H1 (cell line): ENCODE measurements at regions of chr2 and their contacts with region 1.

Region 1: GRCh38 chr2:20675701-20676352 is 8.9 kb downstream of the GDF7 start:
- DNase-seq: peak in 1 of 2 experiments; percentile 66
- H3K4me3 ChIP-seq: no peak overlapping the region
- H3K27ac ChIP-seq: no peak overlapping the region
- H3K4me1 ChIP-seq: peaks cover 7 to 32% (median 17%) of the 10 kb centered on the region in 4 experiments
- H3K27me3 ChIP-seq: peaks cover 10 to 42% (median 32%) of the 10 kb centered on the region in 4 experiments
- CTCF ChIP-seq: peak in 1 of 3 experiments; percentile 22; a peak in 2 of 4 replicates
- EP300 ChIP-seq: no peak
- POLR2A ChIP-seq: no peak
- RAD21 ChIP-seq: no peak; a peak in 1 of 4 replicates

Region 2: GRCh38 chr2:20609349-20609994 is 66.4 kb before region 1 on chr2:
- CTCF ChIA-PET with region 1: no interaction called
- POLR2A ChIA-PET with region 1: no interaction called
- DNase-seq: no peak
- H3K4me3 ChIP-seq: no peak overlapping the region
- H3K27ac ChIP-seq: no peak overlapping the region
- H3K4me1 ChIP-seq: peaks cover 0 to 8% (median 5%) of the 10 kb centered on the region in 4 experiments; a peak in 6 of 7 replicates
- H3K27me3 ChIP-seq: no peaks in the 10 kb centered on the region
- CTCF ChIP-seq: no peak
- EP300 ChIP-seq: no peak
- POLR2A ChIP-seq: no peak
- RAD21 ChIP-seq: no peak

Region 3: GRCh38 chr2:20689428-20690264 is 13.8 kb after region 1 on chr2:
- CTCF ChIA-PET with region 1: interaction called, 35 read pairs
- POLR2A ChIA-PET with region 1: no interaction called
- DNase-seq: no peak
- H3K4me3 ChIP-seq: no peak overlapping the region
- H3K27ac ChIP-seq: no peak overlapping the region
- H3K4me1 ChIP-seq: no peaks in the 10 kb centered on the region
- H3K27me3 ChIP-seq: no peaks in the 10 kb centered on the region
- CTCF ChIP-seq: no peak
- EP300 ChIP-seq: no peak
- POLR2A ChIP-seq: no peak
- RAD21 ChIP-seq: no peak

Region 4: GRCh38 chr2:20728114-20728758 is 52.4 kb after region 1 on chr2:
- CTCF ChIA-PET with region 1: interaction called, 13 read pairs
- POLR2A ChIA-PET with region 1: no interaction called
- DNase-seq: no peak
- H3K4me3 ChIP-seq: no peak overlapping the region
- H3K27ac ChIP-seq: no peak overlapping the region
- H3K4me1 ChIP-seq: no peaks in the 10 kb centered on the region
- H3K27me3 ChIP-seq: no peaks in the 10 kb centered on the region
- CTCF ChIP-seq: no peak
- EP300 ChIP-seq: no peak
- POLR2A ChIP-seq: no peak
- RAD21 ChIP-seq: no peak

Region 5: GRCh38 chr2:20758997-20759396 is 83.2 kb after region 1 on chr2:
- CTCF ChIA-PET with region 1: interaction called, 29 read pairs
- POLR2A ChIA-PET with region 1: no interaction called
- DNase-seq: no peak
- H3K4me3 ChIP-seq: no peak overlapping the region
- H3K27ac ChIP-seq: no peak overlapping the region
- H3K4me1 ChIP-seq: peaks cover 0 to 2% (median 2%) of the 10 kb centered on the region in 4 experiments; a peak in 3 of 7 replicates
- H3K27me3 ChIP-seq: no peaks in the 10 kb centered on the region
- CTCF ChIP-seq: no peak
- EP300 ChIP-seq: no peak
- POLR2A ChIP-seq: no peak
- RAD21 ChIP-seq: no peak

Region 6: DNA sequence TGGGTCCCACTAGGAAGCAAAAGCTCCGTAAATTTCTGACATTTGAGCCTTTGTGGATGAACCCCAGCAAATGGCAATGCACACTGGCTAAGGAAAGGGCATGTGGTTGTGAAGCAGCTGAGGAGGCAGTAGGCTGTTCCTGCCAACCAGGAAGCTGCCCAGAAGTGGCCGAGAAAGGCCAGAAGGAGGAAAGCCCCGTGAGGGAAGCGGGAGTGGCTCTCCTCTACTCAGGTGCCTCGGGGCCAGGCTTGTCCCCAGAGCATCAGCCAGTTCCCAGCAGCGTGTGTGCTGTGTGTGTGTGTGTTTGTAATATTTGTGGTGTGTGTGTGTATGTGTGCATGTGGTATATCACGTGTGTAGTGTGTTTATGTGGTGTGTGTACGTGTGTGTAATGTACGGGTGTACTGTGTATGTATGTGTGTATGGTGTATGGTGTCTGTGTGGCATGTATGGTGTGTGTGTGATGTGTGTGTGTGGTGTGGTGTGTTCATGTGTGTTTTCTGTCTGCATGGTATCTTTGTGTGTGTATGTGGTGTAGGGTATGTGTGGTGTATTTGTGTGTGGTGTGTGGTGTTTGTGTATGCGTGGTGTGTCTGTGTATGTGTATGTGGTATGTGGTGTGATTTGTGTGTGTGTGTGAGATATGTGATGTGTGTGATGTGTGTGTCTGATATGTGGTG is 277.5 kb after region 1 on chr2:
- CTCF ChIA-PET with region 1: interaction called, 15 read pairs
- POLR2A ChIA-PET with region 1: no interaction called
- DNase-seq: no peak
- H3K4me3 ChIP-seq: no peak overlapping the region
- H3K27ac ChIP-seq: no peak overlapping the region
- H3K4me1 ChIP-seq: no peaks in the 10 kb centered on the region; a peak in 1 of 7 replicates
- H3K27me3 ChIP-seq: no peaks in the 10 kb centered on the region
- CTCF ChIP-seq: no peak
- EP300 ChIP-seq: no peak
- POLR2A ChIP-seq: no peak
- RAD21 ChIP-seq: no peak

Region 7: GRCh38 chr2:20976527-20976926 is 300.7 kb after region 1 on chr2:
- CTCF ChIA-PET with region 1: interaction called, 13 read pairs
- POLR2A ChIA-PET with region 1: no interaction called
- DNase-seq: no peak
- H3K4me3 ChIP-seq: no peak overlapping the region
- H3K27ac ChIP-seq: no peak overlapping the region
- H3K4me1 ChIP-seq: no peaks in the 10 kb centered on the region
- H3K27me3 ChIP-seq: no peaks in the 10 kb centered on the region
- CTCF ChIP-seq: no peak
- EP300 ChIP-seq: no peak
- POLR2A ChIP-seq: no peak
- RAD21 ChIP-seq: no peak